ENCODE measurements at regions of chrX and their contacts with region 1.

Region 1: GRCh38 chrX:69615779-69616456 is at the start of gene EDA:
- DNase-seq: peak; percentile 67 to 98 (median 74)

Region 2: GRCh38 chrX:69503782-69504625 is 111.9 kb before region 1 on chrX and contains the start of gene NALF2:
- intact Hi-C with region 1: loop called (anchors 5 kb)
- DNase-seq: peak in 7 of 10 donors; percentile 19 to 89 (median 38)

Region 3: GRCh38 chrX:69538321-69538876 is 77.5 kb before region 1 on chrX:
- intact Hi-C with region 1: loop called (anchors 2 kb)
- DNase-seq: peak in 9 of 10 donors; percentile 45 to 93 (median 69)

Region 4: GRCh38 chrX:69705818-69706217 is 89.9 kb after region 1 on chrX:
- intact Hi-C with region 1: no loop called
- DNase-seq: no peak

Region 5: DNA sequence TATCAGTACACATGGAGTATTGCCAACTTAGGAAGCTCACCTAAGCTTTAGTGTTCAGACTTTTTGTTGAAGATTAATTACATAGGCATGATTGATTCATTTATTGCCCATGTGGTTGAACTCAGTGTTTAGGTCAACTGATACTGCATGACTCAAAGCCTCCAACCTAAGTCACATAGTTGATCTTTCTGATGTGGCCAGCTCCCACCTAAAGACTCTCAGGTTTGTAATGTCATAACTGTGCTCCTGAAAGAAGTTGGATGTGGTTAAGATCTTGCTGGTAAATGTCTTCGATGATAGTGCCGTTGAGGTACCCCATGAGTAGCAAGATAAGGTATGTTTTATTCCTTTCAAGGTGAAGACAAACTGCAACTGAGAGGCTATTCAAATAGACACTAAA is 192.5 kb after region 1 on chrX:
- intact Hi-C with region 1: no loop called
- DNase-seq: no peak

Region 6: DNA sequence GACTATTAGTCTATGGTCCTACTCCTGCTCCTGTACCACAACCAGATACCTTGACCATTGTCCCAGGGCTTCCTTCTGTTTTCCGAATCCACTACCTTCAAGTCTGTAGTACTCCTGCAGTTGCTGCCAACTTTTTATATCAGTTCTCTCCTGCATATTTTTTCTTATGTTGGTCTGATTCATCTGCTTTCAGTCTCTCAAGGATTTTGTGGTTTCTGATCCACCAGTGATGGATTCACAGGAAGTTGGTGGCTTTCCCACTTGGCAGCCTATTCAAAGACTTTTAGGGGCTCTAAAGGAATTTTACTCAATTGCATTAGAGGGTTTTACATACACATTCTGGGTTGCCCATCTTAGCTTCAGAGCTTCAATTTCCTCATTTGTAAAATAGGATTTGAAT is 697.6 kb after region 1 on chrX:
- intact Hi-C with region 1: no loop called
- DNase-seq: no peak

Measured in posterior cingulate gyrus (tissue), 11 donors.